ENCODE measurements at regions of chr19 and their contacts with region 1.

Region 1: DNA sequence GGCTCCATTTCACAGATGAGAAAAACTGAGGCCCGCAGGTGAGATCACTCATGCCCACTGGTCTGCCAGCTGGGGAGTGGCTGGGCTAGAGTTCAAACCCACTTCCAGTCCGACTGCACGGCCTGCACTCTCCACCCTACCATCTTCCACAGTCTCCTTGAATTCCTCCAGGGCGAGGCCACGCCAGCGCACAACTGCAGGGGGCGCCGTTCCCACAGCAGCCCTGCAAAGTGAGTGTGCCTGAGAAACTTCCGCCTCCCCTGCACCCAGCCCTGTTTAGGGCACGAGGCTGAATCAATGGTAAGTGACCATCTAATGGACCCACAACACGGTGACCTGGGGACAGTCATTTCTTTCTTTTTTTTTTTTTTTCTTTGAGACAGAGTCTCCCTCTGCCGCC is 829 bp upstream of the ATCAY start:
- DNase-seq: peak; percentile 24
- ATAC-seq: no peak
- H3K4me3 Mint-ChIP-seq: no peak overlapping the region
- H3K27ac Mint-ChIP-seq: no peak overlapping the region
- H3K4me1 Mint-ChIP-seq: peaks cover 10% of the 10 kb centered on the region
- H3K27me3 Mint-ChIP-seq: peaks cover 35% of the 10 kb centered on the region

Region 2: GRCh38 chr19:3243819-3244700 is 635.6 kb before region 1 on chr19:
- CTCF ChIA-PET with region 1: no interaction called
- POLR2A ChIA-PET with region 1: no interaction called
- intact Hi-C with region 1: loop called in 1 of 2 experiments (anchors 10 kb)
- DNase-seq: peak; percentile 76
- ATAC-seq: peak; percentile 47
- H3K4me3 Mint-ChIP-seq: no peak overlapping the region
- H3K27ac Mint-ChIP-seq: no peak overlapping the region
- H3K4me1 Mint-ChIP-seq: no peaks in the 10 kb centered on the region
- H3K27me3 Mint-ChIP-seq: peaks cover 3% of the 10 kb centered on the region

Region 3: GRCh38 chr19:3899531-3900292 is 20.1 kb after region 1 on chr19:
- CTCF ChIA-PET with region 1: no interaction called
- POLR2A ChIA-PET with region 1: no interaction called
- intact Hi-C with region 1: no loop called
- DNase-seq: no peak
- ATAC-seq: no peak
- H3K4me3 Mint-ChIP-seq: no peak overlapping the region
- H3K27ac Mint-ChIP-seq: no peak overlapping the region
- H3K4me1 Mint-ChIP-seq: no peaks in the 10 kb centered on the region
- H3K27me3 Mint-ChIP-seq: peaks cover 5% of the 10 kb centered on the region

Measured in activated CD4-positive, alpha-beta T cell treated with anti-CD3 and anti-CD28 coated beads for 36 hours (primary cell).